Panc1 (cell line): ENCODE measurements at regions of chr3 and their contacts with region 1.

Region 1: GRCh38 chr3:11392014-11392859 is 120.0 kb downstream of the ATG7 start:
- DNase-seq: no peak
- ATAC-seq: no peak
- H3K4me3 ChIP-seq: no peak overlapping the region
- H3K27ac ChIP-seq: peak overlapping the region; percentile 44; the same call in 1 of the 2 replicates
- H3K4me1 ChIP-seq: no peaks in the 10 kb centered on the region; the same call in 1 of the 2 replicates
- H3K27me3 ChIP-seq: no peaks in the 10 kb centered on the region
- CTCF ChIP-seq: no peak

Region 2: DNA sequence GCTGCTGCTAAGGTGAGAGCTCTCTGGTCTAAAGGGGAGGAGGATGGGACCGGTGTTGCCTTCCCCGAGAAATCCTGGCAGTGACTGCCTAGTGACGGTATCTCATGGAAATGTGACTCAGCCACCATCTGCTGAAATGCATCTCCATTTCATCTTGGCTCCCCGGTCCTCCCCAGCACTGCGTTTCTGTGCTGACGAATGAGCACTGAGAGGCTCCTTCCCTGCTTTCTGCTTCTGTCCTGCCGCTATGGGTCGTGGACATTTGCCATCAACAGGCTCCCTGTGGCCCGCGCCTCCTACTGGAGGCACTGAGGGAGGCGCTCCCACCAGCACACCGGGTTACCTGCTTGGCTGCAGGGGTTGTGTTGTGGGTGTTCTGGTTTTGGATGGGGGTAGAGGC is 1057.8 kb before region 1 on chr3:
- CTCF ChIA-PET with region 1: no interaction called
- POLR2A ChIA-PET with region 1: no interaction called
- in situ Hi-C with region 1: no loop called
- intact Hi-C with region 1: no loop called
- DNase-seq: no peak
- ATAC-seq: no peak
- H3K4me3 ChIP-seq: no peak overlapping the region
- H3K27ac ChIP-seq: no peak overlapping the region
- H3K4me1 ChIP-seq: no peaks in the 10 kb centered on the region
- H3K27me3 ChIP-seq: no peaks in the 10 kb centered on the region
- CTCF ChIP-seq: no peak

Region 3: GRCh38 chr3:10845839-10846656 is 546.2 kb before region 1 on chr3:
- CTCF ChIA-PET with region 1: no interaction called
- POLR2A ChIA-PET with region 1: no interaction called
- in situ Hi-C with region 1: no loop called
- intact Hi-C with region 1: no loop called
- DNase-seq: no peak
- ATAC-seq: no peak
- H3K4me3 ChIP-seq: no peak overlapping the region
- H3K27ac ChIP-seq: no peak overlapping the region
- H3K4me1 ChIP-seq: no peaks in the 10 kb centered on the region
- H3K27me3 ChIP-seq: peaks cover 3% of the 10 kb centered on the region; the same call in 1 of the 2 replicates
- CTCF ChIP-seq: no peak

Region 4: DNA sequence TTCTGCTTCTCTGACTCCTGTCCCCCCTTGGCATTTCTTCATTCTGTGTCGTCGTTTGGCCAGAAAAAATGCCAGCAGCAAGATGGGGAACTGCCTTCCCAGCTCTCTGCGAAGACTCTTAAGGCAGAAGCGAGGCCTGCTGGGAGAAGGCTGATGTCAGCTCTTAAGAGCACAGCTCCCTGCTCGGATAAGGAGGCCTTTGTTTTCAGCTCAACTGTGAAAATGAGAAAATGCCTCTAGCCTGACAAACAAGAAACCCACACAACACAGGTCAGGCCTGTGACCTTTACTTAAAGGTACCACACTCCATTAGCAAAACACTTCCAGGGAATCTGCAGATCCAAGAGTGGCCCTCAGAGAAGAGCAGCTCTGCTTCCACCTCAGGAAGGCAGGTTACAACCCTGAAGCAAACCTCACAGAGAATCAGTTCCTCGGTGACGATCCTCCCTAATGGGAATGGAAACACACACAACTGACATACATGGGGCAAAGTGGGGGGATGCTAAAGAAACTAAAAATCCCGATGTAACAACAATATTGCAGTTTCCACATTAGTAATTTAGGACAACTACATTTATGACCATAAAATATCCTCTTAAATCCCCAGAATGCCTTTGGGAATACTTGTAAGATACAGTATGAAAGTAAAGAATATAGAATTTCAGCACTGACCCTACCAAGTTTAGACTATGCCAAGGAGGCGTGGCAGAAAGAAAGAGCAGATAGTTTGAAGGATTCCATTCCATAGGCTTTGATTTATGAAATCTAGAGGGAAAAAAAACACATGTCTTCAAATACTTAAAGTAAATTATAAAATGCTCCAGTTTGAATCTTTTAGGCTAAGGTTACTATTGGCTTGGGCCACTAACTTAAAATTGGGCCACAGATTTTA is 199.4 kb after region 1 on chr3:
- CTCF ChIA-PET with region 1: no interaction called
- POLR2A ChIA-PET with region 1: interaction called, 14 read pairs
- in situ Hi-C with region 1: no loop called
- intact Hi-C with region 1: no loop called
- DNase-seq: no peak
- ATAC-seq: peak; percentile 82
- H3K4me3 ChIP-seq: peak overlapping the region in 1 of 2 experiments; percentile 25; a peak in 2 of 4 replicates
- H3K27ac ChIP-seq: peak overlapping the region; percentile 96
- H3K4me1 ChIP-seq: peaks cover 83% of the 10 kb centered on the region
- H3K27me3 ChIP-seq: no peaks in the 10 kb centered on the region
- CTCF ChIP-seq: no peak

Region 5: DNA sequence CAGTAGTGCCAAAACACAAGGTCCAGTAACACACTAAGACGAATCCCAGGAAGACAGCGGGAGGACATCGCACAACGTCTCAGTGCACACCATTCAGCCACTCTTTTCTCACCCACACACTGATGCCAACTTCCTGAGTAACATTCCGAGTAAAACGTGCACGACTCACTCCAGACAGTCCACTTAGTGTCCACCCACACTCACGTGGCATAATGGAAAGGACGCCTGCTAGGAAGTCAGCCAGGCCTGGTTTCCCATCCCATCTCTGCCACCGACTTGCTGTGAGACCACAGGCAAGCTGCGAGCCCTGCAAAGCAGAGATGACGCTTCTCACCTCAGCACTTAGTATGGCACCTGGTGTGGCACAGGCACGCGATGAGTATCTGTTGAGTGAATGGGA is 288.3 kb after region 1 on chr3:
- CTCF ChIA-PET with region 1: no interaction called
- POLR2A ChIA-PET with region 1: interaction called, 10 read pairs
- in situ Hi-C with region 1: no loop called
- intact Hi-C with region 1: no loop called
- DNase-seq: no peak
- ATAC-seq: no peak
- H3K4me3 ChIP-seq: no peak overlapping the region
- H3K27ac ChIP-seq: no peak overlapping the region
- H3K4me1 ChIP-seq: no peaks in the 10 kb centered on the region
- H3K27me3 ChIP-seq: no peaks in the 10 kb centered on the region
- CTCF ChIP-seq: no peak